GM10248 (cell line): ENCODE measurements at regions of chr12 and their contacts with region 1.

Region 1: GRCh38 chr12:66467932-66468331 is 165.6 kb downstream of the HELB start:
- DNase-seq: no peak
- CTCF ChIP-seq: no peak

Region 2: GRCh38 chr12:66491853-66492252 is 23.9 kb after region 1 on chr12:
- CTCF ChIA-PET with region 1: interaction called, 10 read pairs
- POLR2A ChIA-PET with region 1: no interaction called
- DNase-seq: no peak
- CTCF ChIP-seq: no peak